Activated T-helper 1 cell treated with anti-CD3 and anti-CD28 coated beads, Interleukin-12 subunit alpha, Interleukin-12 subunit beta, Interleukin-2, Interleukin-4 antibody, amounts not matched to agents 30 ng/mL and 10 ng/mL and 1 ng/mL, durations not matched to agents 14 hours and 24 hours and 36 hours (primary cell): ENCODE measurements at regions of chr2 and their contacts with region 1.

Region 1: DNA sequence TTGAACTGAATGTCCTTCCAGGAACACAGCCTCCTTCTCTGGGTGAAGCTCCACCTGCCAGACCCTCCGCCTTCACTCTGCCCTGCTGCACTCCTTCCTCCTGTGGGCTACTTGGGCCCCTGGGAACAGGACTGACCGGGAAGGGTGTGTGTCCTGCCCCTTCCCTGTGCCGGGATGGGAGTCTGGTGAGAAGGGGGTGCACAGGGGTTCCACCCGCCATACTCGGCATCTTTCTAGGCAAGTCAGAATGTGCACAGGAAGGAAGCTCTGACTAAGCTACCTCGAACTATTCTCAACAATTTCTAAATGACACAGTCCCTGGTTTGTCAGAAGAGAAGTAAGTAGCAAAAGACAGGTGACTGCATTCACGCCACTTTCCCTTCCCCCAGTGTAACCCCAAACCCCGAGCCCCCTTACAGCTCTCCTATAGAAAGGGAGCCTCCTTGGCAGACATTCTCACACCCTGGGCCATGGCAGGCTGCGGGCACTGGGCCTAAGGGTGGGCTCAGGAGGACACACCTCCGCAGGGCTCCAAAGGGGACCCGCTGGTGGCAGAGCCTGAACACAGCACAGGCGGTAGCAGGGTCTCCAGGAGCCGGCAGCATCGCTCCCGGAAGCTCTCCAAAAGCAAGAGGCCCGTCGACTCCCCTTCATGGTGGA is 184.1 kb downstream of the HDAC4 start:
- DNase-seq: peak; percentile 34
- H3K4me3 Mint-ChIP-seq: peak overlapping the region; percentile 76
- H3K27ac Mint-ChIP-seq: peak overlapping the region; percentile 69
- H3K4me1 Mint-ChIP-seq: peaks cover 51% of the 10 kb centered on the region
- H3K27me3 Mint-ChIP-seq: no peaks in the 10 kb centered on the region

Region 2: DNA sequence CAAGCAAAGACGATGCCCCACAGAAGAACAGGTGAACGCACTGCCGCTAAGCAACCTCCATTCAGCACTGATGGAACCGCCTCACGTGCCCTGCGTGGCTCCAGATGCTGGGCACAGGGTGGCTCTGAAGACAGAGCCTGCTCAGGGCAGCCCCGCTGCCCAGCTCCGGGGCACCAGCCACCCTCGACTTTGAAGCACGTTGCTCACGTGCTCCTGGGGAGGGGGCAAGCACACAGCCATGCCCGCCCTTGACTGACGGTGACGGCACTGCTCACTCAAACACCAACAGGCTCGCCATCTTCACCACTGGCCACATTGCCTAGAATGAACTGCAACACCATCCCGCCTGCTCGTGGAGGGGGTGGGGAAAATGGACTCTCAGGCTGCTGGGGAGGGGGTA is 67.2 kb before region 1 on chr2:
- intact Hi-C with region 1: loop called (anchors 5 kb)
- DNase-seq: no peak
- H3K4me3 Mint-ChIP-seq: no peak overlapping the region
- H3K27ac Mint-ChIP-seq: no peak overlapping the region
- H3K4me1 Mint-ChIP-seq: peaks cover 19% of the 10 kb centered on the region
- H3K27me3 Mint-ChIP-seq: no peaks in the 10 kb centered on the region

Region 3: GRCh38 chr2:239204876-239205468 is 11.8 kb before region 1 on chr2:
- intact Hi-C with region 1: loop called (anchors 1 kb)
- DNase-seq: no peak
- H3K4me3 Mint-ChIP-seq: no peak overlapping the region
- H3K27ac Mint-ChIP-seq: no peak overlapping the region
- H3K4me1 Mint-ChIP-seq: peaks cover 21% of the 10 kb centered on the region
- H3K27me3 Mint-ChIP-seq: no peaks in the 10 kb centered on the region

Region 4: GRCh38 chr2:239259603-239260298 is 43.0 kb after region 1 on chr2:
- intact Hi-C with region 1: loop called (anchors 1 kb)
- DNase-seq: no peak
- H3K4me3 Mint-ChIP-seq: peak overlapping the region; percentile 83
- H3K27ac Mint-ChIP-seq: peak overlapping the region; percentile 93
- H3K4me1 Mint-ChIP-seq: peaks cover 83% of the 10 kb centered on the region
- H3K27me3 Mint-ChIP-seq: no peaks in the 10 kb centered on the region

Region 5: GRCh38 chr2:239321596-239322415 is 105.1 kb after region 1 on chr2:
- intact Hi-C with region 1: loop called (anchors 2 kb)
- DNase-seq: peak; percentile 73
- H3K4me3 Mint-ChIP-seq: peak overlapping the region; percentile 76
- H3K27ac Mint-ChIP-seq: peak overlapping the region; percentile 97
- H3K4me1 Mint-ChIP-seq: peaks cover 88% of the 10 kb centered on the region
- H3K27me3 Mint-ChIP-seq: no peaks in the 10 kb centered on the region